WTC11 (cell line): ENCODE measurements at regions of chr9 and their contacts with region 1.

Region 1: DNA sequence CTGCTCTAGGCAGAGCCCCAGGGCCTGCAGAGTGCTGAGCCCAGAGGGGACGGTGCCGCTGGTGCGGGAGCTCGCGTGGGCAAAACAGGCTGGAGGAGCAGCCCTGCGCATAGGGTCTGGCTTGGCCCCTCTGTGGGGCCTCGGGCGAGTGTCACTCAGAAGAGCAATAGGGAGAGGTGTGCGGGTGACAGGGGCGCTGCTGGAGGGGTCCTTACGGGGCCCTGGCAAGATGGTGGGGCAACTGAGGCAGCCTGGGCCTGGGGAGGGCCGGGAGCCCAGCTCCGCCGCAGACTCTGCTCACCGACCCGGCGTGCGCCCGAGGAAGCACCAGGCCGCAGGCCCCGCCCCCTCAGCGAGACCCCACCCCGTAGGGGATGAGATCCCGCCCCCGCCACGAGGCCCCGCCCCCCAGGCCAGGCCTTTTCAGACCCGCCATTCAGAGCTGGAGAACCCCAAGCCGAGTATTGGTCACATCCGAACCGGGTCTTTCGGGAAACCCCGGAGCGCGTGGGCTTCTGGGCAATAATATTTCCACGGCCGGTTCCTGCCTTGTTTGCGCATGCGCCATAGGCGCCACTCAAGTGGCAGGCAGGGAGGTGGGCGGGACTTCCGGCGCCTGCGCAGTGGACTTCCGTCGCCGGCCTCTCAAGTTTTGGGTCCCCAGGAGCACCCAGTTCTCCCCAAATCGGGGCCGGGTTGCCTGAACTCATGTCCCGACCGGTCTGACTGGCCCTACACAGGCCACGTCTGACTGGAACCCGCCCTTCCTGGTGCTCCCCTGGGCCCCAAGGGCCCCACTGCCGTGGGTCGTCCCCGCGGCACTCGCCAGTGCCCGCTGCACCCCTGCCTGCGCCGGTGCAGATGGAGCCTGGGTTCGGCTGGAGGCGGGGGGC is 1.3 kb upstream of the RNF208 start:
- DNase-seq: peak; percentile 97
- ATAC-seq: peak; percentile 73
- H3K4me3 Mint-ChIP-seq: peak overlapping the region; percentile 77
- H3K27ac Mint-ChIP-seq: no peak overlapping the region
- H3K4me1 Mint-ChIP-seq: peaks cover 3% of the 10 kb centered on the region
- H3K27me3 Mint-ChIP-seq: no peaks in the 10 kb centered on the region
- CTCF ChIP-seq: no peak

Region 2: GRCh38 chr9:137064027-137064879 is 159.1 kb before region 1 on chr9:
- CTCF ChIA-PET with region 1: interaction called, 16 read pairs
- POLR2A ChIA-PET with region 1: no interaction called
- DNase-seq: peak; percentile 84
- ATAC-seq: peak; percentile 51
- H3K4me3 Mint-ChIP-seq: no peak overlapping the region
- H3K27ac Mint-ChIP-seq: no peak overlapping the region
- H3K4me1 Mint-ChIP-seq: peaks cover 12% of the 10 kb centered on the region
- H3K27me3 Mint-ChIP-seq: peaks cover 6% of the 10 kb centered on the region
- CTCF ChIP-seq: peak; percentile 99

Region 3: GRCh38 chr9:137129456-137130175 is 93.7 kb before region 1 on chr9:
- CTCF ChIA-PET with region 1: interaction called, 10 read pairs
- POLR2A ChIA-PET with region 1: no interaction called
- DNase-seq: peak; percentile 87
- ATAC-seq: peak; percentile 96
- H3K4me3 Mint-ChIP-seq: peak overlapping the region; percentile 78
- H3K27ac Mint-ChIP-seq: no peak overlapping the region
- H3K4me1 Mint-ChIP-seq: peaks cover 14% of the 10 kb centered on the region
- H3K27me3 Mint-ChIP-seq: peaks cover 23% of the 10 kb centered on the region
- CTCF ChIP-seq: no peak

Region 4: GRCh38 chr9:137188490-137189296 is 34.6 kb before region 1 on chr9 and contains the starts of genes ANAPC2 and SSNA1:
- CTCF ChIA-PET with region 1: interaction called, 18 read pairs
- POLR2A ChIA-PET with region 1: interaction called, 3 read pairs
- DNase-seq: peak; percentile 92
- ATAC-seq: peak; percentile 84
- H3K4me3 Mint-ChIP-seq: peak within 1 kb of the TSS; percentile 92
- H3K27ac Mint-ChIP-seq: peak within 1 kb of the TSS; percentile 94
- H3K4me1 Mint-ChIP-seq: peaks cover 20% of the 10 kb centered on the region
- H3K27me3 Mint-ChIP-seq: no peaks in the 10 kb centered on the region; the same call in 1 of the 2 replicates
- CTCF ChIP-seq: no peak
- total RNA-seq, gene ANAPC2: 61.0 to 80.9 TPM (median 61.2 TPM) in 3 replicates
- total RNA-seq, gene SSNA1: 102 to 105 TPM (median 103 TPM) in 3 replicates

Region 5: DNA sequence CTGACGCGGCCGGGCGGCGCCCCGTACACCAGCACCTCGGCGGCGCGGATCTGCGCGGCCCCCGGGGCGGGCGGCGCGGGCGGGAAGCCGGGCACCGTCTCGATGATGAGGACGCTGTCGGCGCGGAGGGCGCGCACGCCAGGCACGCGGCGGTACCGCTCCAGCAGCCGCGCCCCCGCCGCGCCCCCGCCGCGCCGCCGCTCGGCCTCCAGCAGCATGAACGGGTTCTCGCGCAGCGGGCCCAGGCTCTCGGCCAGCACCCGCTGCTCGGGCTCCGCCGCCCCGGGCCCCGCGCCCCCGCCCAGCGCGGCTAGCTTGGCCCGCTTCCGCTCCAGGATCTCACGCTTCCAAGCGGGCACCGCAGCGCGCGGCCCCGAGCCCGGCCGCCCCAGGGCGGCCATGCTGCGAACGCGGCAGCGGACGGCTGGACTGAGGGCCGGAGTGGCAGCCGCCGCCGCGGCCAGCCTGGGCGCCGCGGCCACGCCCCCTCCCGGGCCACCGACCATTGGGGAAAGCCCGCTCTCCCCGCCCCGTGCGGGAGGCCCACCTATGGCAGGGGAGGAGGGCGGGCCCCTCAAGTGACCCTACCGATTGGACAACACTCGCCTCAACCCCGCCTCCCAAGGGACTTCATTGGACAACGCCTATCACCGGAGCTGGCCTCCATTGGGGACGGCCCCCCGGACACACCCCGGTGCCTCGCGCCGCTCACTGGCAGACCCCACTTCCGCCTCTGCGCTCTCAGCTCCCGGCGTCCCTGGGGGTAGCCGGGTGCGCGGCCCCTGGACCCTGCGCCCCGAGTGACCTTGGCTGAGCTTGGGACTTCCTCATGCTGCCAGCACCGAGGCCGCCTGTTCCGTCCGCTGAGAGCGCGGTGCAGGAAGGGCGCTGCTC is 22.8 kb before region 1 on chr9 and contains the start of gene TPRN:
- CTCF ChIA-PET with region 1: interaction called, 15 read pairs
- POLR2A ChIA-PET with region 1: interaction called, 12 read pairs
- DNase-seq: peak; percentile 100
- ATAC-seq: peak; percentile 97
- H3K4me3 Mint-ChIP-seq: peak within 1 kb of the TSS; percentile 84
- H3K27ac Mint-ChIP-seq: peak within 1 kb of the TSS; percentile 91
- H3K4me1 Mint-ChIP-seq: peaks cover 33% of the 10 kb centered on the region
- H3K27me3 Mint-ChIP-seq: no peaks in the 10 kb centered on the region
- CTCF ChIP-seq: no peak
- total RNA-seq, gene TPRN: 33.4 to 43.1 TPM (median 38.1 TPM) in 3 replicates

Region 6: DNA sequence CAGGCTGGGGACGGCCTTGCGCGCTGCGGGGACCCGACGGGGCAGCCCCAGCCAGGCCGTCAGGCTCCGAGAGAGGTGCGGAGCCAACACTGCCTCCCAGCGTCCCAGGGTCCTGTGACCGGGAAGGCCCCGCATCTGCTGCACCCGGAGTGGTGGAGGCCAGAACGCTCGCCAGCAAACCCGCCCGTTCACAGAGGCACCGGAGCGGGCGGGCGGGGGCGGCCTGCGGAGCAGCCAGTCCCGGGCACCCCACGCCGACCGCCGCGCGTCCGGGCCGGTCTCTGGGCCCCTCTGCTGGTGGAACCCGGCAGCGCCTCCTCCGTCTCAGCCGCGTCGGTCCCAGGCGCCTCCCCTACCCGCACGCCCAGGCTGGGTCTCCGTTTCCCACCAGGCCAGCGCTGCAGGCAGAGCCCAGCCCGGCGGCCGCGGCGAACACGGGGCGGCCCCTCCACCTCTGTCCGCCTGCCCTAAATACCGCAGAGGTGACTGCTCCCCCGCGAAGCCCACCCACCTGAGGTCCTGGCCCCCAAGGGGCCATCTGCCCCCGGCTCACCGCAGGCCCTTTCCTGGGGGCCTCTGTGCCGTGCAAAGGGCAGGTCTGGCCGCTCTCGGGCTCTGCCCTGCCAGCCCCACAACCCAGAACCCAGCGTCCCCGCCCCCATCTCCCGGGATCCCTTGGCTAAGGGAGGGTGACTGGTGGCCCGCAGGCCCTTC is 183.7 kb after region 1 on chr9:
- CTCF ChIA-PET with region 1: no interaction called
- POLR2A ChIA-PET with region 1: no interaction called
- DNase-seq: peak; percentile 87
- ATAC-seq: peak; percentile 91
- H3K4me3 Mint-ChIP-seq: peak overlapping the region; percentile 30; the same call in 1 of the 2 replicates
- H3K27ac Mint-ChIP-seq: no peak overlapping the region
- H3K4me1 Mint-ChIP-seq: no peaks in the 10 kb centered on the region
- H3K27me3 Mint-ChIP-seq: peaks cover 5% of the 10 kb centered on the region; the same call in 1 of the 2 replicates
- CTCF ChIP-seq: peak; percentile 55

Region 7: GRCh38 chr9:137482094-137482781 is 258.9 kb after region 1 on chr9:
- CTCF ChIA-PET with region 1: no interaction called
- POLR2A ChIA-PET with region 1: no interaction called
- DNase-seq: no peak
- ATAC-seq: no peak
- H3K4me3 Mint-ChIP-seq: no peak overlapping the region
- H3K27ac Mint-ChIP-seq: 0 out of 2 replicates have a peak overlapping the region, but pooled peaks have one; percentile 57
- H3K4me1 Mint-ChIP-seq: 0 out of 2 replicates have a peak, but pooled peaks cover 4% of the 10 kb centered on the region
- H3K27me3 Mint-ChIP-seq: no peaks in the 10 kb centered on the region
- CTCF ChIP-seq: no peak